ENCODE measurements at regions of chr20 and their contacts with region 1.

Region 1: DNA sequence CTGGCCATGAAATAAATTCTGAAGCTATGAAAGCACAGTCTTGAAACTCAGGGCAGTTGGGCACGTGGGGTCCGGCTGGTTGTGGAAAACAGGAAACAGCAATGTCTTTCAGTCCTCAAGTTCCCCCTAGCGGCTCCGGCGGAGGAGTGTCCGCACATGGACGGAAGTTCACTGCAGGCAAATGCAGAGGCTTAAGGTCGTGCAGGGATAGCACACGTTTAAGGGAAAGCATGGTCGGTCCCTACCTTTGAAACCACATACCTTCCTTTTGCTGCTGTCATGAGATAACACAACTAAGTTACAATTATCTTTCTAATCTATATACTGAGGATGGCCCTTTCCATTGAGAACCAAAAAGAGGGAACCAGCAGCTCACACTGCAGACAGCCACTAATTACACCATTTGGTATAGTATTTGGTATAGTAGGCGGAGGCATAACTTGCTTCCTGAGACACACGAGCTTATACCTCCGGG is 52.6 kb upstream of the NFATC2 start:
- DNase-seq: peak; percentile 81 to 94 (median 84)
- ATAC-seq: peak; percentile 98
- H3K4me3 ChIP-seq: no peak overlapping the region
- H3K27ac ChIP-seq: peak overlapping the region; percentile 52; the same call in 2 of the 3 replicates
- H3K4me1 ChIP-seq: peaks cover 5 to 23% of the 10 kb centered on the region in 2 experiments; a peak in 3 of 5 replicates
- H3K27me3 ChIP-seq: no peaks in the 10 kb centered on the region
- CTCF ChIP-seq: peak; percentile 87 to 92 (median 91)
- EP300 ChIP-seq: peak; percentile 63
- POLR2A ChIP-seq: no peak
- RAD21 ChIP-seq: peak; percentile 91 to 95

Region 2: GRCh38 chr20:51372176-51372803 is 222.8 kb before region 1 on chr20:
- CTCF ChIA-PET with region 1: interaction called, 25 read pairs
- POLR2A ChIA-PET with region 1: no interaction called
- in situ Hi-C with region 1: no loop called
- intact Hi-C with region 1: loop called (anchors 1 kb)
- DNase-seq: peak; percentile 71 to 85 (median 76)
- ATAC-seq: peak; percentile 94
- H3K4me3 ChIP-seq: no peak overlapping the region
- H3K27ac ChIP-seq: no peak overlapping the region
- H3K4me1 ChIP-seq: peaks cover 17 to 26% of the 10 kb centered on the region in 2 experiments
- H3K27me3 ChIP-seq: peaks cover 8 to 22% of the 10 kb centered on the region in 2 experiments; a peak in 4 of 5 replicates
- CTCF ChIP-seq: peak; percentile 88 to 90 (median 89)
- EP300 ChIP-seq: no peak
- POLR2A ChIP-seq: no peak
- RAD21 ChIP-seq: peak; percentile 87 to 92

Region 3: DNA sequence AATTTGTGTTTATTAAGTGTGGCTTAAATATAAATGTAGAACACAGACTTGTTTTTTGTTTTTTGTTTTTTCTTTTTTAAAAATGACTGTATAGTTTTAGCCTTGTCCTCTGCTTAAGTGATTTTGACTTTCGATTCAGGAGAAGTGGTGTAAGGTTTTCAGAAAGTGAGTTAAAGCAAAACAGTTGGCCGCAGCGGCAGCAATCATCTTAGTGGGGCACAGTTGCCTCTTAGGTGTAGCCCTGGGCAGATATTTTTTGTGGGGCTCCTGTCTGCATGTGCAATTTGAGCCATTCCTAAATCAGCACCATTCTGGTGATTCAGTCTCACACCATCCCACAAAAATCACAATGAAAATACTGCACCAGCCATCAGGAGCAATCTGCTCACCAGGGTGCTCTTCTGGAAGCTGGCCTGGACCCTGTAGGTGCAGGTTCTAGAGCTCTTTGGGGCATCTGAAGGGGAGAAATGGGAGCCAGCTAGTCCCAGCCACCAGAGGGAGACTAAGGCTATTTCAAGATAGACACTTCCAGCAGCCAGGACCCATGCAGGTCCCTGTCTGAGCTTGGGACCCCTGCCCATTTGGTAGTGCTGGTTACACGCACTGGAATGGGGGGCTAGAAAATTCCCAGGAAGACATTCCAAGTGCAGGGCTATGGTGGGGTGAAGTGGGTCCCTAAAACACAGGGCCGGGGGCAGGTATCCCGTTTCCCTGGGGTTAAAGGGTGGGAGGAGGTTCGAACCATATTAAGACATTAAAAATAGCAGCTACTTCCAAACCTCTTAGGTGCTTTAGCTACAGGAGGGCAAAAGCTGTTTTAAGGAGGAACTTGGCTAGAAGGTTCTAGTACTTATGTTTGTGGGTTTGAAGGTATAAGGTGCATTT is 209.2 kb before region 1 on chr20:
- CTCF ChIA-PET with region 1: interaction called, 16 read pairs
- POLR2A ChIA-PET with region 1: no interaction called
- in situ Hi-C with region 1: no loop called
- intact Hi-C with region 1: no loop called
- DNase-seq: peak in 3 of 4 experiments; percentile 30 to 43 (median 35)
- ATAC-seq: peak; percentile 73; the same call in 2 of the 3 replicates
- H3K4me3 ChIP-seq: no peak overlapping the region
- H3K27ac ChIP-seq: no peak overlapping the region
- H3K4me1 ChIP-seq: peaks cover 4% of the 10 kb centered on the region in 2 experiments; a peak in 3 of 5 replicates
- H3K27me3 ChIP-seq: no peaks in the 10 kb centered on the region
- CTCF ChIP-seq: peak; percentile 51 to 61 (median 55)
- EP300 ChIP-seq: no peak
- POLR2A ChIP-seq: no peak
- RAD21 ChIP-seq: peak; percentile 34 to 49; a peak in 3 of 4 replicates

Region 4: GRCh38 chr20:51404298-51405060 is 190.6 kb before region 1 on chr20:
- CTCF ChIA-PET with region 1: interaction called, 11 read pairs
- POLR2A ChIA-PET with region 1: interaction called, 4 read pairs
- in situ Hi-C with region 1: no loop called
- intact Hi-C with region 1: no loop called
- DNase-seq: no peak
- ATAC-seq: no peak
- H3K4me3 ChIP-seq: no peak overlapping the region
- H3K27ac ChIP-seq: no peak overlapping the region
- H3K4me1 ChIP-seq: no peaks in the 10 kb centered on the region; a peak in 2 of 5 replicates
- H3K27me3 ChIP-seq: no peaks in the 10 kb centered on the region
- CTCF ChIP-seq: no peak
- EP300 ChIP-seq: no peak
- POLR2A ChIP-seq: no peak
- RAD21 ChIP-seq: no peak

Region 5: DNA sequence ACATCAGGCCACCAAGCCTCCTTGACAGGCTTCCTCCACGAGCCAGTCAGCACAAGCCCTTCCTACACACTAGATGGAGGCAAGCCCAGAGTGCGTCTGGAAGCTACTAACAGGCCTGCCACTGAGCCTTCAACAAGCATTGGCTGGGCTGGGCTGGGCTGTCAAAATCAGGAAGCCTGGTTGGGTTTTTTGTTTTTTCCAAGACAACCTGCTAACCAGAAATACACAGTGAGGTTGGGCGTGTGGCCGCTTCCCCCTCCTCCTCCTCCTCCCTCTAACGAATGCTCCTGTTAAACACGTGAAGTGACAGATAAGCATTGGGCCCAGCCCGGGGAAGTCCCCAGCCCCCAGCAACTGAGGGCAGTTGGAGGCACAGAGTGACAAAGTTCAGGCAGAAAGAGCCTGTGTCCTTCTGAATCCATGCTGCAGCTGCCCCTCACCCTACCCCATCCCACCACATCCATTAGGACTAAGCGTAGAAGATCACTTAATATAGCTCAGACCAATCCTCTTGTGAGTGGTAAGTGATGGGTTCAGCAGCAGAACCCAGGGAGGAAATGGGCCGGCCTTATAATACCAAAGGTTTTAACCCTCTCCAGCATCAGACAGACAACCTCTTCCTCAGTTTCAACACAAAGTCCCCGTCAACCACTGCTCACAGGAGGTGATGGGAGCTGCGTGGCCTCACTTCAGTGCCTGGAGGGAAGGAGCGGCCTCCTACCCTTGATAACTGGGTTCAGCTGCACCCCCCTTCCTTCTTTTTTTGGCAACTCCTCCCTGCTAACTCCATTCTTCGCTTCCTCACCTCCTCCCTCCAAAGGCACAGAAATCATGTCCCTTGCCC is 53.7 kb before region 1 on chr20:
- CTCF ChIA-PET with region 1: no interaction called
- POLR2A ChIA-PET with region 1: interaction called, 4 read pairs
- in situ Hi-C with region 1: no loop called
- intact Hi-C with region 1: loop called (anchors 2 kb)
- DNase-seq: peak; percentile 64 to 92 (median 76)
- ATAC-seq: peak; percentile 88
- H3K4me3 ChIP-seq: peak overlapping the region; percentile 72
- H3K27ac ChIP-seq: peak overlapping the region; percentile 76
- H3K4me1 ChIP-seq: peaks cover 26 to 33% of the 10 kb centered on the region in 2 experiments; a peak in 4 of 5 replicates
- H3K27me3 ChIP-seq: peaks cover 1 to 11% of the 10 kb centered on the region in 2 experiments; a peak in 4 of 5 replicates
- CTCF ChIP-seq: no peak
- EP300 ChIP-seq: peak; percentile 78
- POLR2A ChIP-seq: peak; percentile 58; the same call in 1 of the 2 replicates
- RAD21 ChIP-seq: 0 out of 4 replicates have a peak, but pooled peaks of 1 of the 2 experiments have one; percentile 13

Region 6: DNA sequence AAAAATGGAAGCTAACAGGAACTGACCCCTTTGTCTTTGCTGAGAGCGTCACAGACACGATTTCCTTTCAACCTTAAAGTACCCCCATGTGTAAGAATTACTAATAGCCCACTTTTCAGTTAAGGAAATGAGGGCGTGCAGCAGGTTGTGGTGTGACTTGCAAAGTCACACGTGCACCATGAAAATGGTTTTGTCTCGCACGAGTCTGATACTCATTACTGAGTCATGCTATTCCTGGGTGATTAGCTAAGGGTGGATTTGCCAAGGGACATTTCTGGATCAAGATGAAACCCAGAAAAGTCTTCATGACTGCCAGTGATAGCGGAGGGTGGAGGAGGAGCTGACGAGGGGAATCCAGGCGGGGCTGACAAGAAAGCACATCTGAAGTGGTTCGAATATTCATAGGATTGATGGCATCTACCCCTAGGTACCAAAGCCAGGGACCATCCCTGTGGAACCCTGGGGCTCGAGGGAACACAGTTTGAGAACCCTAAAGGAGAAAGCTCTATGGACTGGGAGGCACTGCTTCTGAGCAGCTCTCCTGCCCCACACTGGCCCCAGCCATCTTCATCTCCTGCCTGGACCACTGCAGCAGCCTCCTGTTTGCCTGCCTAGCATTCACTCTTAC is 40.4 kb before region 1 on chr20:
- CTCF ChIA-PET with region 1: no interaction called
- POLR2A ChIA-PET with region 1: no interaction called
- in situ Hi-C with region 1: no loop called
- intact Hi-C with region 1: no loop called
- DNase-seq: no peak
- ATAC-seq: no peak
- H3K4me3 ChIP-seq: no peak overlapping the region
- H3K27ac ChIP-seq: no peak overlapping the region
- H3K4me1 ChIP-seq: peaks cover 0 to 2% of the 10 kb centered on the region in 2 experiments; a peak in 1 of 5 replicates
- H3K27me3 ChIP-seq: peaks cover 2 to 7% of the 10 kb centered on the region in 2 experiments; a peak in 4 of 5 replicates
- CTCF ChIP-seq: no peak
- EP300 ChIP-seq: no peak
- POLR2A ChIP-seq: no peak
- RAD21 ChIP-seq: no peak

Region 7: GRCh38 chr20:51715163-51715860 is 120.2 kb after region 1 on chr20:
- CTCF ChIA-PET with region 1: no interaction called
- POLR2A ChIA-PET with region 1: no interaction called
- in situ Hi-C with region 1: no loop called
- intact Hi-C with region 1: no loop called
- DNase-seq: no peak
- ATAC-seq: no peak
- H3K4me3 ChIP-seq: no peak overlapping the region
- H3K27ac ChIP-seq: no peak overlapping the region
- H3K4me1 ChIP-seq: peaks cover 0 to 4% of the 10 kb centered on the region in 2 experiments; a peak in 1 of 5 replicates
- H3K27me3 ChIP-seq: peaks cover 17 to 22% of the 10 kb centered on the region in 2 experiments; a peak in 4 of 5 replicates
- CTCF ChIP-seq: no peak
- EP300 ChIP-seq: no peak
- POLR2A ChIP-seq: no peak
- RAD21 ChIP-seq: no peak